Esophagus muscularis mucosa (tissue), 4 donors: ENCODE measurements at regions of chrX and their contacts with region 1.

Region 1: DNA sequence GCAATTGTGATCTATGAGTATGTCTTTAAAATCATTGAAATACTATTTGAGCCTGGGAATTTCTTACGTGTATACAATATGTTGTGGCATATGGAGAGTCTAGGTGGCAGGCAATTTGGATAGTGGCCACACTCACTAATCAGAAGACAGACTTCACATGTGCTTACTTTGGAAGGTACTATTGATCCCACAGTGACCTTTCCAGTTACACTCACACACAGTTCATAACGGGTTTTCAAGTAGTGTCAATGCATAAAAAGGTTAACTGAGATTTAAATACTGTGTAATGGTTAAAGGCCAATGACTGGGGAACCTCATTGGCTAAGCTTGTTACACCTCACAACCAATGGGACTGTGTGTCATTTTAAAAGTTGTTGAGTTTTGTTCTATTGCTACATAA is 783.2 kb downstream of the RPA4 start:
- DNase-seq: no peak
- H3K4me3 ChIP-seq: no peak overlapping the region
- H3K27ac ChIP-seq: no peak overlapping the region
- H3K4me1 ChIP-seq: no peaks in the 10 kb centered on the region
- H3K27me3 ChIP-seq: no peaks in the 10 kb centered on the region
- CTCF ChIP-seq: no peak
- EP300 ChIP-seq: no peak
- POLR2A ChIP-seq: no peak

Region 2: GRCh38 chrX:97609938-97610337 is 57.0 kb before region 1 on chrX:
- intact Hi-C with region 1: loop called (anchors 10 kb)
- DNase-seq: no peak
- H3K4me3 ChIP-seq: no peak overlapping the region
- H3K27ac ChIP-seq: no peak overlapping the region
- H3K4me1 ChIP-seq: no peaks in the 10 kb centered on the region
- H3K27me3 ChIP-seq: no peaks in the 10 kb centered on the region
- CTCF ChIP-seq: no peak
- EP300 ChIP-seq: no peak
- POLR2A ChIP-seq: no peak

Region 3: GRCh38 chrX:97705936-97706335 is 39.0 kb after region 1 on chrX:
- intact Hi-C with region 1: no loop called
- DNase-seq: no peak
- H3K4me3 ChIP-seq: no peak overlapping the region
- H3K27ac ChIP-seq: no peak overlapping the region
- H3K4me1 ChIP-seq: no peaks in the 10 kb centered on the region
- H3K27me3 ChIP-seq: no peaks in the 10 kb centered on the region
- CTCF ChIP-seq: no peak
- EP300 ChIP-seq: no peak
- POLR2A ChIP-seq: no peak